ENCODE measurements at regions of chr12 and their contacts with region 1.

Region 1: GRCh38 chr12:92145731-92146496 is at the start of gene BTG1:
- DNase-seq: peak; percentile 99 to 100 (median 100)
- H3K4me3 ChIP-seq: peak within 1 kb of the TSS; percentile 92 to 99 (median 94)
- H3K4me3 Mint-ChIP-seq: peak within 1 kb of the TSS; percentile 98 to 99
- H3K27ac ChIP-seq: peak within 1 kb of the TSS; percentile 90 to 92
- H3K27ac Mint-ChIP-seq: peak within 1 kb of the TSS; percentile 96 to 99 (median 97)
- H3K4me1 ChIP-seq: peaks cover 23 to 61% of the 10 kb centered on the region in 2 donors
- H3K4me1 Mint-ChIP-seq: peaks cover 26% of the 10 kb centered on the region
- H3K27me3 ChIP-seq: no peaks in the 10 kb centered on the region
- H3K27me3 Mint-ChIP-seq: peaks cover 0 to 4% (median 2%) of the 10 kb centered on the region in 3 donors
- CTCF ChIP-seq: no peak
- polyA plus RNA-seq, gene BTG1: 189 to 242 (median 192) TPM

Region 2: DNA sequence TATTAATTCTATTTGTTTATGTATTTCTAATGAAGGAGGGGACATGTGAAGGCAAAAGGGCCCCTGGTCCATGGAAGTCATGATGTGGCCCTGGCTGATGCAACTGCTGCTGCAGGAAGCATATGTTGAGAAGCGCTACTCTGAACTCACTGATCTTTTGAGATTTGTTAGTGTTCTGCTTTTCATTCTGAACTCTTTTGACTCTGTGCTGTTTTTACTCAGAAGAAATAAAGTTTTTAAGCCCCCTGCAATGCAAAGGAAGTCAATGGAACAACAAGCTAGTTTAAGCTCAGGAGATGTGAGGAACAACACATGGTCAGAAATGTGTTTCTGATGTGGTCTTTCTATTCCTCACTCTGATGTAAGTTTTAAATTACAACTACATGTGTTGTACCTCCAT is 88.6 kb after region 1 on chr12:
- intact Hi-C with region 1: loop called in 1 of 2 experiments (anchors 10 kb)
- DNase-seq: peak; percentile 41 to 63 (median 49)
- H3K4me3 ChIP-seq: peak overlapping the region in 1 of 3 experiments; percentile 2
- H3K4me3 Mint-ChIP-seq: peak overlapping the region in 1 of 2 donors; percentile 52
- H3K27ac ChIP-seq: peak overlapping the region; percentile 9 to 80
- H3K27ac Mint-ChIP-seq: peak overlapping the region; percentile 74 to 93 (median 86)
- H3K4me1 ChIP-seq: peaks cover 44 to 61% of the 10 kb centered on the region in 2 donors
- H3K4me1 Mint-ChIP-seq: peaks cover 51% of the 10 kb centered on the region
- H3K27me3 ChIP-seq: no peaks in the 10 kb centered on the region
- H3K27me3 Mint-ChIP-seq: no peaks in the 10 kb centered on the region
- CTCF ChIP-seq: no peak

Region 3: GRCh38 chr12:92445253-92446082 is 299.6 kb after region 1 on chr12:
- intact Hi-C with region 1: loop called in 1 of 2 experiments (anchors 5 kb)
- DNase-seq: peak; percentile 46 to 54 (median 49)
- H3K4me3 ChIP-seq: peak overlapping the region in 2 of 3 experiments; percentile 5 to 13
- H3K4me3 Mint-ChIP-seq: peak overlapping the region in 1 of 2 donors; percentile 60
- H3K27ac ChIP-seq: peak overlapping the region; percentile 45 to 82
- H3K27ac Mint-ChIP-seq: peak overlapping the region; percentile 91 to 98 (median 94)
- H3K4me1 ChIP-seq: peaks cover 19 to 23% of the 10 kb centered on the region in 2 donors
- H3K4me1 Mint-ChIP-seq: peaks cover 31% of the 10 kb centered on the region
- H3K27me3 ChIP-seq: no peaks in the 10 kb centered on the region
- H3K27me3 Mint-ChIP-seq: peaks cover 2 to 6% (median 3%) of the 10 kb centered on the region in 3 donors
- CTCF ChIP-seq: no peak

Region 4: GRCh38 chr12:92593734-92594402 is 448.0 kb after region 1 on chr12:
- intact Hi-C with region 1: loop called in 1 of 2 experiments (anchors 5 kb)
- DNase-seq: peak; percentile 96 to 99 (median 97)
- H3K4me3 ChIP-seq: no peak overlapping the region
- H3K4me3 Mint-ChIP-seq: peak overlapping the region; percentile 26 to 66
- H3K27ac ChIP-seq: peak overlapping the region; percentile 44 to 80
- H3K27ac Mint-ChIP-seq: peak overlapping the region; percentile 78 to 96 (median 94)
- H3K4me1 ChIP-seq: peaks cover 11 to 12% of the 10 kb centered on the region in 2 donors
- H3K4me1 Mint-ChIP-seq: peaks cover 29% of the 10 kb centered on the region
- H3K27me3 ChIP-seq: no peaks in the 10 kb centered on the region
- H3K27me3 Mint-ChIP-seq: peaks cover 0 to 8% (median 2%) of the 10 kb centered on the region in 3 donors
- CTCF ChIP-seq: no peak

Region 5: DNA sequence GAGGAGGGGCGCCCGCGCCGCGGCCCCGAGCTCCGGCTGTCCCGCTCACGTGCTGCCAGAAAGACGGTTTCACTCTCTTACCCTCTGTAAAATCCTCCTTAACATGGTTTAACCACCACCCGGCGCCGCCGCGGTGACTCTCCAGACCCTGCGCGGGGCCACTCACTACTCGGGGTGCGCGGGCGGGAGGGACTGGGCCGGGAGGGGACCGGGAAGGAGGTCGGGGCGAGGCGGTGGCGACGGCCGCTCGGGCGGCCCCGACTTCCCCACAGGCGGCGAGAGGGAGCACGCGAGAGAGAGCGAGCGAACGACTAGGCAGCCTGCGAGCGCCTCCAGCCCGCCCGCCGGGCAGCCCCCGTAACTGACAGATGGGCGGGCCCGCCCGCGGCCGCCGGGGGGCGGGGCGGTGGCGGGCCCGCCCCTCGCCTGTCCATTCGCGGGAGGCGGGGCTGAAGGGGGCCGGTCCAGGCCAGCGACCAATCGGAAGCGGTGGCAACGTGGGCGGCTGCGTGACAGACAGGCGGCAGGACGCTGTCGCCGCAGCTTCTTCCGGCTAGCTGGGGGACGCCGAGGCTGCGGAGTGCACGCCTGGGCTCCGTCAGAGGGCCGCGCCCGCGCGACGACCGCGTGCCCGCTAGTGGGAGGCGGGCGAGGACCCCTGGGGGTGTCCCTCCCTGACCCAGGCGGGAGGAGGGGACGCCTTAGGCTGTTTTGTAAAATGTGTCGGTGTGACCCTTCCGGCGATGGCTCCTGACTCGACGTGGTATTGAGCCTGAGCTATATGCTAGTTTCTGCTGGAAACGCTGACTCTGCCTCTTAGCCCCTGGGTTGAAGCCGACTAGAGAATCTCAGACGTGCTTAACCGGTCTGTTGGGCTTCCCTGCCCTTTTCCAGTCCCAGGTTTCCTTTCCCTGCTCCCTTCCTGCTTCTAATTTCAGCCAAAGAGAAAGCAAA is 783.3 kb after region 1 on chr12 and contains the start of gene EEA1:
- intact Hi-C with region 1: loop called in 1 of 2 experiments (anchors 5 kb)
- DNase-seq: peak; percentile 96
- H3K4me3 ChIP-seq: peak within 1 kb of the TSS; percentile 61 to 91 (median 81)
- H3K4me3 Mint-ChIP-seq: peak within 1 kb of the TSS; percentile 91 to 96
- H3K27ac ChIP-seq: peak within 1 kb of the TSS; percentile 90 to 97
- H3K27ac Mint-ChIP-seq: peak within 1 kb of the TSS; percentile 92 to 99 (median 99)
- H3K4me1 ChIP-seq: peaks cover 26 to 30% of the 10 kb centered on the region in 2 donors
- H3K4me1 Mint-ChIP-seq: peaks cover 25% of the 10 kb centered on the region
- H3K27me3 ChIP-seq: no peaks in the 10 kb centered on the region
- H3K27me3 Mint-ChIP-seq: peaks cover 0 to 3% (median 1%) of the 10 kb centered on the region in 3 donors
- CTCF ChIP-seq: no peak
- polyA plus RNA-seq, gene EEA1: 3.0 to 10.7 (median 3.6) TPM

Measured in CD14-positive monocyte (primary cell).